ENCODE measurements at regions of chr1 and their contacts with region 1.

Region 1: DNA sequence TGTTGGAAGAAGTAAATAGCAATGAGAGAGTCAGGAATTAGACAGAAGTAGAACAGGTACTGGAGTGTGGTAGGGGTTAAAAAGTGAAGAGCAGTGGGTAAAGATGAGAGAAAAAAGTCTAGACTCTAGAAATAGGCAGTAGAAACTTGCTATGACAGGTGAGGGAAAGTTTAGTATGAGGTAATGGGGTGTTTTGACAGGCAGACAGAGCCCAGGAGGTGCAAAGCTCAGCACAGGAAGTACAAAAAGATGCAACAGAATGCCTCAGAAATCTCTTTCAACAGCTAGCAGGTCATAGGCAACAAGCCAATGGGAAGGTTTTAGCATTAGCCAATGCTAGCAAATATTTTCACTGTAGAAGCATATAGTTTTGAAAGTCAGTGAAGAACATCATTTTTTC is 319.1 kb upstream of the SGIP1 start:
- DNase-seq: no peak
- H3K4me3 ChIP-seq: no peak overlapping the region
- H3K27ac ChIP-seq: no peak overlapping the region
- H3K4me1 ChIP-seq: no peaks in the 10 kb centered on the region
- H3K27me3 ChIP-seq: no peaks in the 10 kb centered on the region
- CTCF ChIP-seq: no peak

Region 2: GRCh38 chr1:66090859-66091457 is 123.9 kb before region 1 on chr1:
- intact Hi-C with region 1: loop called (anchors 10 kb)
- DNase-seq: no peak
- H3K4me3 ChIP-seq: no peak overlapping the region
- H3K27ac ChIP-seq: no peak overlapping the region
- H3K4me1 ChIP-seq: no peaks in the 10 kb centered on the region
- H3K27me3 ChIP-seq: no peaks in the 10 kb centered on the region
- CTCF ChIP-seq: no peak

Region 3: GRCh38 chr1:67355745-67356424 is 1141.0 kb after region 1 on chr1:
- intact Hi-C with region 1: no loop called
- DNase-seq: no peak
- H3K4me3 ChIP-seq: no peak overlapping the region
- H3K27ac ChIP-seq: no peak overlapping the region
- H3K4me1 ChIP-seq: no peaks in the 10 kb centered on the region
- H3K27me3 ChIP-seq: no peaks in the 10 kb centered on the region
- CTCF ChIP-seq: no peak

Measured in colonic mucosa (tissue), 4 donors.